Calu3 (cell line): ENCODE measurements at regions of chr1 and their contacts with region 1.

Region 1: DNA sequence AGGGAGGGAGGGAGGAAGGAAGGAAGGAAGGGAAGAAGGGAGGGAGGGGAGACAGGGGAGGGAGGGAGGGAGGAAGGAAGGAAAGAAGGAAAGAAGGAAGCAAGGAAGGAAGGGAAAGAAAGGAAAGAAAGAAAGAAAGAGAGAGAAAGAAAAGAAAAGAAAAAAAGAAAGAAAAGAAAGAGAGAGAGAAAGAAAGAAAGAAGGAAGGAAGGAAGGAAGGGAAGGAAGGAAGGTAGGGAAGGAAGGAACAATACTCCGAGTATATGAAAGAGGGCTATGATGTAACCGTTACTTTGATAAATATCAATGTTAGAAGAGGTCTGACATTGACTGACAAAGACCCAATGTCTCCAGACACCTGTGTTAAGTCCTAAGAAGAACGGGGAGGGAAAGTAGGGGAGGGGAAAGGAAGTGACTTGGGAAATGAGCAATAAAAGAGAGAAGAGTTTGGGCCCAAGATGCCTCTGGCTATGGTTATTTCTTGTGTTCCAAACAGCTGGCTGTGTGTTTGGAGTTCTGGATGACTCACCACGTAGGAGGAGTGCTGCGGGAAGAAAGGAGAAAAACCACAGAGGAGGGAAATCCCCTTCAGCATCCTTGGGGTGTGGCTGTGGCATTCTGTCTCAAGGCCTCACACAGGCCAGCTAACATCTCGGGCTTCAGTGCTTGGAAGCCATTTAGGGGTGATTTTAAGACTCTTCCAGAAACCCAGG is 37.0 kb upstream of the RXRG start:
- DNase-seq: peak; percentile 80
- H3K4me3 Mint-ChIP-seq: no peak overlapping the region
- H3K27ac Mint-ChIP-seq: peak overlapping the region; percentile 54
- H3K4me1 Mint-ChIP-seq: peaks cover 19% of the 10 kb centered on the region
- H3K27me3 Mint-ChIP-seq: peaks cover 44% of the 10 kb centered on the region
- CTCF ChIP-seq: no peak

Region 2: GRCh38 chr1:164863056-164863455 is 618.9 kb before region 1 on chr1:
- CTCF ChIA-PET with region 1: no interaction called
- intact Hi-C with region 1: no loop called
- DNase-seq: no peak
- H3K4me3 Mint-ChIP-seq: no peak overlapping the region
- H3K27ac Mint-ChIP-seq: no peak overlapping the region
- H3K4me1 Mint-ChIP-seq: no peaks in the 10 kb centered on the region
- H3K27me3 Mint-ChIP-seq: peaks cover 31% of the 10 kb centered on the region
- CTCF ChIP-seq: no peak

Region 3: DNA sequence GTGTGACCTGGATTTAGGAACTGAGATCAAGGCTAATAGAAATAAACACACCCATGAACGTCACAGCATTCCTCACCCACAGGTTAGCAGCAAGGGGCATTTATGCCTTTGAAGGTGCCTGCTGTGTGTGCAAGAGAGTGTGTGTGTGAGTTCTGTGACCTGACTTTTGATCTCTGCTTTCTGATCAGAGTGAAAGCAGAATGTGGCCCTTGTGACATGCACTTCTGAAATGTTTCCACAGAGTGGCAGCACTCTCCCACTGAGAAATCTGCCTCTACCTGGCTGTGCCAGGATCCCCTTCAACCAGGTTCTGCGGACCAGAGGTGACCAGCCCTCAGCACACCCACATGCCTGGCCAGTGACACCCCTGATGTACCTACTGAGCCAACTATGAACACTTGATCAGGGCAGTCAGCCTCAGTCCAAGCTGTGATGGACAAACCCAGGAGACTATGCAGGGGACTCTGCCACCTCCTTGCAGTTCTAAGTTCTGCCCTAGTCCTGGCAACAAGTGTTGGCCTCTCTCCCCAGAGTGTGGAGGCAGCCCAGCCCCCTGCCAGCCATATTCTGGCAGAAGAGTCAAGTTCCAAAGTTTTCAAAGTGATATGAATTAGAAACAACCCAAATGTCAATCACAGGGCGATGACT is 78.0 kb before region 1 on chr1:
- CTCF ChIA-PET with region 1: interaction called, 3 read pairs
- intact Hi-C with region 1: loop called (anchors 5 kb)
- DNase-seq: peak; percentile 57
- H3K4me3 Mint-ChIP-seq: no peak overlapping the region
- H3K27ac Mint-ChIP-seq: no peak overlapping the region
- H3K4me1 Mint-ChIP-seq: no peaks in the 10 kb centered on the region
- H3K27me3 Mint-ChIP-seq: peaks cover 23% of the 10 kb centered on the region
- CTCF ChIP-seq: peak; percentile 76

Region 4: DNA sequence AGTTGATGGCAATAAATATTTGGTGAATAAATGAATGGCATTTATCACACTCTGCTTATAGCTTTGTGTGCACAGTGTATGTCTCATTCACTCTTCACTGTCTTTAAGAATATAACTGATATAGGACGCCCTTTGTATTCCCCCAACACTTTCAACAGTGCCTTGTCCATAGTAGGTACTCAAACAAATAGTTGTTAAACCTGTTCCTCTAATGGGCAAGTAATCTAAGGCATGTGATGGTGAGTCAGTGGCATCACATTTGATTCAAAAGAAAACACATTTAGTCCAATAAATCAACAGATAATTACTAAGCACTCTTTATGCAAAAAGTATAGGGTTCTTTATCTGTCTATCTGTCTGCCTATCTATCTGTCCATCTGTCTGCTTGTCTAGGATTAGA is 25.8 kb before region 1 on chr1:
- CTCF ChIA-PET with region 1: interaction called, 4 read pairs
- intact Hi-C with region 1: loop called (anchors 2 kb)
- DNase-seq: peak; percentile 34
- H3K4me3 Mint-ChIP-seq: no peak overlapping the region
- H3K27ac Mint-ChIP-seq: peak overlapping the region; percentile 73
- H3K4me1 Mint-ChIP-seq: peaks cover 27% of the 10 kb centered on the region
- H3K27me3 Mint-ChIP-seq: no peaks in the 10 kb centered on the region
- CTCF ChIP-seq: no peak

Region 5: DNA sequence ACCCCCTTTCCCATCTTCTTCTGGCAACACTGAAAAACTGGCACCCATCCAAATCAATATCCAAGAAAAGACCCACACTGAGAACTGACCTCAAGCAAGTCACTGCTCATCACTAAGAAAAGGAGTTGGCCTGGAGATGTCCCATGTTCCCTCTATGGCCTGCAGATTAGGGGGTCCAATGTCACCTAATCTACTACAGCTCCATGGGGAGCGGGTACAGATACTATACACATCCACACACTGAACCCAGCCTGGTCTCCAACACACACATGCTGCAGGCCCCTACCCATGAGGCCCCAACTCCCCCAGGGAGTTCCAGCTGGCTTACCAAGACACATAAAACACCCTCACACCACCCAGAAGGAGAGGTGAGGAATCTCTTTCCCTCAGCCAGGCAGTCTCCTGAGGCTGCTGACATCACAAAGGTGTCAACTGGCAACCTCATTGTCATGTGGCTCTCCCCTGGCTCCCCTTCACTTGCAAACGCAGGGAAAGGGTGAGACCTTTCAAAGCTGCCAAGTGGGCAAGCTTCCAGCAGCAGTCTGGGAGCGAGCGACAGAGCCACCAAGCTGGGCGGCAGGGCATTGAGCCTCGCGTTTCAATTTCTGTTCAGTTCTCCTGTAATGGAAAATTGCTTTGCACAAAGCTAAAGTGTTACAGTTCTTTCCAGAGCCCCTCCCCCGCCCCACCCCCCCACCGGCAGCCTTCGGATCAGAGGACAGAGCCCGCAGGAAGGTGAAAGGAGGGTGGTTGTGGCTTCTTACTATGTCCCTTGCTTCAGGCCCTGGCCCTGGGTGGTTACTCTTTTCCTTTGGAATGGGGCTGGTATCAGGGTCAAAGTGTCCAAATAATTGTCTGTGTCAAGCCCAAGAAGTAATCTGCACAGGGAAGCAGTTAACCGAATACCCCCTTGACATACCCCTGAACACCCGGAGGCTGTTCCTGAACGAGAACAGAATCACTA is 61.8 kb after region 1 on chr1 and contains the start of gene LRRC52:
- CTCF ChIA-PET with region 1: no interaction called
- intact Hi-C with region 1: loop called (anchors 5 kb)
- DNase-seq: peak; percentile 44
- H3K4me3 Mint-ChIP-seq: no peak within 1 kb of the TSS
- H3K27ac Mint-ChIP-seq: peak within 1 kb of the TSS; percentile 36
- H3K4me1 Mint-ChIP-seq: peaks cover 14% of the 10 kb centered on the region
- H3K27me3 Mint-ChIP-seq: peaks cover 55% of the 10 kb centered on the region
- CTCF ChIP-seq: no peak
- total RNA-seq, gene LRRC52: not detected in 2 replicates